ENCODE measurements at regions of chr11 and their contacts with region 1.

Region 1: GRCh38 chr11:44842220-44842619 is 108.5 kb downstream of the TP53I11 start:
- DNase-seq: peak; percentile 96
- ATAC-seq: peak; percentile 88
- H3K4me3 ChIP-seq: no peak overlapping the region
- H3K27ac ChIP-seq: peak overlapping the region; percentile 93
- H3K4me1 ChIP-seq: peaks cover 16% of the 10 kb centered on the region
- H3K27me3 ChIP-seq: no peaks in the 10 kb centered on the region
- CTCF ChIP-seq: no peak
- POLR2A ChIP-seq: no peak
- RAD21 ChIP-seq: peak; percentile 24

Region 2: DNA sequence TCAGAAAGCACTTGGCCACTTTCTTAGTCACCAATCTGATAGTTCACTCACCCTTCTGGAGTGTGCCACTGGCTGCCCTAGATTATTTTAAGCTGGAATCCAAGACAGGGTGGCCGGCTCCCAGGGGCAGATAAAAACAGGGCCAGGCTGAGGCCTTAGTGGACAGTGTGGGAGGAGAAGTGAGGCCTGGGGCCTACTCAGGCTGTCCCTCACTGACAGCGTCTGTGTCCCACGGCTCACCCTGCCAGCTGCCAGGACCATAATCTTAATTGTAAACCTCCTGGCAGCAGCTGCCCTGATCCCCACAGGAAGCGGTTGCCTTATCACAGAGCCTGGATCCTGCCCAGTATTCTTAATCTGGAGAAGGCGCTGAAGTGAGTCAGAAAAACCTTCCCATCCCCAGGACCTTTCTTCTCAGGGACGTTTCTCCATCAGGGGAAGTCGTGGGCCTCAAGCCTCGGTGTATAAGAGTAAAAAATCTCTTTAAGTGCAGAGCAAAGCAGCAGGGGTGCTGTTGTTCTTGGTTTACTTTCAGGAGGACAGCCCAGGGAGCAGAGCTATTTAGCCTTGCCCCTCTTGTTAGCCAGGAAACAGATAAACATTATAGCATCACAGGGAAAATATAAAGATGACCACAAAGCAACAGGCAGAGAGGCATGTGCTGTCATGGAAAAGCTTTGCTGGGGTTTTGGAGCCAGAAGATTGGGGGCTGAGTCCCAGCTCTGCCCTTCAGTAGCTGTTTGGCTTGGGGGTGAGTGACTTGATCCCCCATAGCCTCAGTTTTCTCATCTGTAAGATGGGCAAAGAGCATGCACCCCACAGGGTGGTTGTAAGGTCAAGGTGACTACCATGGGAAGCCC is 75.9 kb before region 1 on chr11:
- CTCF ChIA-PET with region 1: interaction called, 3 read pairs
- POLR2A ChIA-PET with region 1: no interaction called
- dilution Hi-C with region 1: no loop called
- in situ Hi-C with region 1: no loop called
- intact Hi-C with region 1: loop called (anchors 1 kb)
- DNase-seq: peak; percentile 93
- ATAC-seq: peak; percentile 75
- H3K4me3 ChIP-seq: no peak overlapping the region
- H3K27ac ChIP-seq: peak overlapping the region; percentile 59
- H3K4me1 ChIP-seq: peaks cover 25% of the 10 kb centered on the region
- H3K27me3 ChIP-seq: no peaks in the 10 kb centered on the region
- CTCF ChIP-seq: peak; percentile 39
- POLR2A ChIP-seq: no peak
- RAD21 ChIP-seq: peak; percentile 33

Measured in IMR-90 (cell line).